Activated T-helper 1 cell treated with anti-CD3 and anti-CD28 coated beads, Interleukin-12 subunit alpha, Interleukin-12 subunit beta, Interleukin-2, Interleukin-4 antibody, amounts not matched to agents 30 ng/mL and 10 ng/mL and 1 ng/mL, durations not matched to agents 14 hours and 24 hours and 36 hours (primary cell): ENCODE measurements at regions of chrX and their contacts with region 1.

Region 1: DNA sequence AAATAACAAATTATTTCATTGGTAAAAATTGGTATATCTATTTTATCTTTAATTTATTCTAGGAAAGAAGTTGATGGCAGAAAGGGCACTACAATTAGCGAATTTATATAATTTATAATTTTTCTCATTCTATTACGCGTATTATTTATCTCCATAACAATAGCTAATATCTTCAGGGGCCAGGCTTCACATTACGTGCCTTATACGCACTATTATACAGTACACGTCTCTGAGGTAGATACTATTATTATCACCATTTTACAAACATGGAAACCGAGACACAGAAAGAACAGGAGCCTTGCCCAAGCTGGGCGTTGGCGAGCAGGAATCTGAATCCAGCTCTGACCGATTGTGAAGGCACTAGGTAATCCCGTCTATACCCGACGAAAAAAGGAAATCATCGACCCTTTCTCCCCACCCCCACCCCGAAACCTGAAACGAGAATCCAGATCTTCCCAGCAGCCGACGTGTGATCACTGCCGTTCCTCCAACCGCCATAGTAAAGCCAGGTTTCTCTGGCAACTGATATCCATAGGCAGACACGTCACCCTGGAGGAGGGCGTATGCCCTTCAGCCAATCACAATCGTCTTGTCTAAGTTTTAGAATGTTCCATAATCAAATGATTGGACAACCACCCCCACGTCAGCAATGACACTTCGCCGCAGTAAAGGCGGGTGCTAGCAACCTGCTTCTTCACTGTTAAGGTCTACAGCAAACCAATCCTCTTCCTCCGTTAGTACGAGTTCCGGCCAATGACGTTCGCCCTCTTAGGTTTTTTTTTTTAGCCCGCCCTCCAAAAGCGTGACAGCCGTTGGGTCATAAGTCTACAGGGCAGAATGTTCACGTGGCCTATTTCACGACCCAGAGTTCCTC is at the start of gene MORF4L2:
- DNase-seq: peak; percentile 85
- H3K4me3 Mint-ChIP-seq: peak within 1 kb of the TSS; percentile 90
- H3K27ac Mint-ChIP-seq: peak within 1 kb of the TSS; percentile 90
- H3K4me1 Mint-ChIP-seq: peaks cover 11% of the 10 kb centered on the region
- H3K27me3 Mint-ChIP-seq: no peaks in the 10 kb centered on the region
- total RNA-seq, gene MORF4L2: 225 and 229 TPM in 2 replicates

Region 2: DNA sequence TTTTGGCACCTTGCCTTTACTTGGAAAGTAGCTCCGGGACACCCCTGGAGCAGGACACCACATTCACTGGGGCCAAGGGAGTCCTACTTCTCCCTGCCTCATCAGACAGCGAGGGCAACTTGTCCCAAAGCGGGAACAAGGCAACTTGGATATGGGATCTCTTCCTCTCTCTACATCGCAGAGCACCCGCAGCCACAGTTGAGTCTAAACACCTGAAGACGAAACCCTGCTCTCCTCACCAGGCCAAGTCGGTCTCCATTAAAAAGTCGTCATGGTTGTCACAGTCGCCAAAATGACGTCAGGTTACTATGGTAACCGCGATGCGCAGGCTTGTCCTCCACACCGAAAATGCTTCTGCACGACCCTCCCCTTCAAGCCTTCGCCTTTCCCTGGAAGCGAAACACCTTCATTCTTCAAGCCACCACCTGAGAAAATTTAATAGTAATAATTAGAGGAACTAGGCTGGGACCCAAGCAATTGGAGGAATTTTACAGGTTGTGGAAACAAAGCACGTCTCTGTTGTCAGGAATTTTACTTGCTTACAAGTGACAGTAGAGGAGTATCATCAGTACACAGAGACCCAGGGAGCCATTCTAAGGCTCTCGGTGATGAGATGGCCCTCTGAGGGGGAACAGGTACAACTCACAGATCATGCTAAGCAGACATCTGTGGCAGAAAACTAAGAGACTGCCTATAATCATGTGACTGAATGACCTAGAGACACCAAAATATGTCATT is 131.6 kb before region 1 on chrX:
- intact Hi-C with region 1: loop called (anchors 1 kb)
- DNase-seq: peak; percentile 40
- H3K4me3 Mint-ChIP-seq: peak overlapping the region; percentile 86
- H3K27ac Mint-ChIP-seq: peak overlapping the region; percentile 91
- H3K4me1 Mint-ChIP-seq: no peaks in the 10 kb centered on the region
- H3K27me3 Mint-ChIP-seq: peaks cover 4% of the 10 kb centered on the region

Region 3: GRCh38 chrX:103730796-103731493 is 44.5 kb after region 1 on chrX:
- intact Hi-C with region 1: no loop called
- DNase-seq: no peak
- H3K4me3 Mint-ChIP-seq: no peak overlapping the region
- H3K27ac Mint-ChIP-seq: no peak overlapping the region
- H3K4me1 Mint-ChIP-seq: peaks cover 7% of the 10 kb centered on the region
- H3K27me3 Mint-ChIP-seq: peaks cover 4% of the 10 kb centered on the region

Region 4: GRCh38 chrX:103806862-103807474 is 120.5 kb after region 1 on chrX:
- intact Hi-C with region 1: loop called (anchors 2 kb)
- DNase-seq: no peak
- H3K4me3 Mint-ChIP-seq: no peak overlapping the region
- H3K27ac Mint-ChIP-seq: no peak overlapping the region
- H3K4me1 Mint-ChIP-seq: peaks cover 12% of the 10 kb centered on the region
- H3K27me3 Mint-ChIP-seq: peaks cover 4% of the 10 kb centered on the region

Region 5: GRCh38 chrX:103918581-103919269 is 232.3 kb after region 1 on chrX:
- intact Hi-C with region 1: loop called (anchors 1 kb)
- DNase-seq: peak; percentile 57
- H3K4me3 Mint-ChIP-seq: peak overlapping the region; percentile 93
- H3K27ac Mint-ChIP-seq: peak overlapping the region; percentile 91
- H3K4me1 Mint-ChIP-seq: peaks cover 17% of the 10 kb centered on the region
- H3K27me3 Mint-ChIP-seq: no peaks in the 10 kb centered on the region